ENCODE measurements at regions of chr17 and their contacts with region 1.

Region 1: DNA sequence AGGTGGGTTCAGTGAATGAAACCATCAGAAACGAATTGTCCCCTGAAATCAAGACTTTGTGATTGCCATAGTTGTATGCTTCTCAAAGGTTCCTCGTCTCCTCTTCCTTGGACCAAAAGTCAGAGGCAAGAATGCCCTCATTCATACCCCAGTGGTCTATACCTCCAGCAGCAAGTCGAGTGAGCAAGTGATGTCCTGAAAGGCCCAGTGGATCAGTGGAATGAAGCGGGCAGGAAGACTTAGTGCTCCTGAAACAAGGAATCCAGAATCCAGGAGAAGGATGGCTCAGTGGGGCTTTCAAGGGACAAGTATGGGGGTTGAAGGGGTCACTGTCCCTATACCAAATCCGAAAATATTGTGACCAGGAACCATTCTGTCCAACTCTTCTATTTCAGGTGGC is 5.3 kb upstream of the ERBB2 start:
- DNase-seq: no peak
- H3K4me3 Mint-ChIP-seq: no peak overlapping the region
- H3K27ac Mint-ChIP-seq: no peak overlapping the region
- H3K4me1 Mint-ChIP-seq: peaks cover under 1% of the 10 kb centered on the region
- H3K27me3 Mint-ChIP-seq: peaks cover 15% of the 10 kb centered on the region

Region 2: GRCh38 chr17:39740357-39741131 is 46.0 kb after region 1 on chr17:
- intact Hi-C with region 1: loop called (anchors 5 kb)
- DNase-seq: peak; percentile 65
- H3K4me3 Mint-ChIP-seq: no peak overlapping the region
- H3K27ac Mint-ChIP-seq: peak overlapping the region; percentile 45
- H3K4me1 Mint-ChIP-seq: peaks cover 25% of the 10 kb centered on the region
- H3K27me3 Mint-ChIP-seq: peaks cover 15% of the 10 kb centered on the region

Measured in activated CD4-positive, alpha-beta T cell treated with anti-CD3 and anti-CD28 coated beads, Interleukin-2, amount 10 ng/mL, durations not matched to agents 24 days and 14 days (primary cell).